ENCODE measurements at regions of chr7 and their contacts with region 1.

Region 1: DNA sequence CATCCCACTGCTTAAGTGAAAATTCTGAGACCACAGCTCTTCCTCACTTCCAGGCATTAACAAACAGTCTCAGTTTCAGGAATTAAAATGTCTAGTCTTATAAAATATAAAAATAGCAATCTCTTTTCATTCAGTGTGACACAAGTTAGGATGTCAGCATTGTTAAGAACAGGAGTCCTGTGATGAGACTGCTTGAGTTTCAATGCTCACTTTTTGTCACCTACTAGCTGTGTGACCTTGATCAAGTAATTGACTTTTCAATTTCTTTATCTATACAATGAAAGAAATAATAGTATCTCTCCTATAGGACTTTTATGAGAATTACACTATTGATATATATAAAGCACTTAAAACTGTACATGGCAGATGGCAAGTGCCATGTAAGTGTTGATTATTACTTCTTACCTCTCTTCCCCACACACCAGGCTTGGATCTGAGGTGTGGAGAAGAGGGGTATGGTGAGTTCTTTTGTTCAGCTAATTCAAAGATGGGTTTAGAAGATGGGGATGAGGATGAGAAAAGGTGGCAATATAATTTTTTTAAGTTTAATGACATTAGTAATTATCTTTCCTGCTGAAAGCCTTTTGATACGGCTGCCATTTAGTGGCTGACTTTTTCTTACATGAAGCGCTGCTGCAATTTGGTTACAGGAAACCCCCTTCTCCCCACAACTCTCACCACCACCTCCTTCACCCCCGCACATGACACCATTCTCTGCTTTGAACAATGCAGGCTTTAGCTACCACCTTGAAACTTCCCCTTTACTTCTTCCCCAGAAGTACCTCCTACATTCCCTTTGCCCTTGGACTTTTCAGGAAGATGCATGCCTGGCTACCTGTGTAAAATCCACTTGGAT is 20.8 kb upstream of the HYAL4 start:
- DNase-seq: peak; percentile 85
- H3K4me3 Mint-ChIP-seq: no peak overlapping the region
- H3K27ac Mint-ChIP-seq: peak overlapping the region; percentile 76
- H3K4me1 Mint-ChIP-seq: peaks cover 21% of the 10 kb centered on the region
- H3K27me3 Mint-ChIP-seq: peaks cover 13% of the 10 kb centered on the region

Region 2: GRCh38 chr7:123534383-123535260 is 289.5 kb before region 1 on chr7 and contains the start of gene IQUB:
- CTCF ChIA-PET with region 1: no interaction called
- intact Hi-C with region 1: loop called (anchors 1 kb)
- DNase-seq: peak; percentile 99
- H3K4me3 Mint-ChIP-seq: peak within 1 kb of the TSS; percentile 92
- H3K27ac Mint-ChIP-seq: peak within 1 kb of the TSS; percentile 82
- H3K4me1 Mint-ChIP-seq: peaks cover 27% of the 10 kb centered on the region
- H3K27me3 Mint-ChIP-seq: peaks cover 18% of the 10 kb centered on the region
- total RNA-seq, gene IQUB: 0.07 TPM in 1 of 2 experiments, not detected in the other

Region 3: GRCh38 chr7:123583821-123584220 is 240.3 kb before region 1 on chr7:
- CTCF ChIA-PET with region 1: no interaction called
- intact Hi-C with region 1: no loop called
- DNase-seq: no peak
- H3K4me3 Mint-ChIP-seq: no peak overlapping the region
- H3K27ac Mint-ChIP-seq: no peak overlapping the region
- H3K4me1 Mint-ChIP-seq: no peaks in the 10 kb centered on the region
- H3K27me3 Mint-ChIP-seq: peaks cover 4% of the 10 kb centered on the region

Region 4: DNA sequence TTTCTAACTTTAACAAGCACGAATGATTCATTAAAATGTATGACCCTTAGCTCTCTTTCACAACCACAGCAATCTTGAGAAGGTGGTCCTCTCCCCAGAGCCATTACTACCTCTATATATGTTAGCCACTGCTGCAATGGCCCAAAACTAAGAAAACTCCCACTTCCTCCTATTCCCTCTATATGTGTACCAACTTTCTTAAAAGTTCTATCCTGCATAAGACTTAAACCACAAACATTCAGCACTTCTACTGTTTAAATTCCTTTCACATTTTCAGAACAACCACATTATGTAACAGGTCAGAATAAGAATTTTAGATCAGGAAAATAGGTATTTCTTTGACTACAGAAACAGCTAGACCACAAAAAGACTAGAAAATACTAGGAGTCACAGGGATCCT is 111.5 kb before region 1 on chr7:
- CTCF ChIA-PET with region 1: no interaction called
- intact Hi-C with region 1: loop called (anchors 1 kb)
- DNase-seq: no peak
- H3K4me3 Mint-ChIP-seq: no peak overlapping the region
- H3K27ac Mint-ChIP-seq: peak overlapping the region; percentile 14
- H3K4me1 Mint-ChIP-seq: peaks cover 52% of the 10 kb centered on the region
- H3K27me3 Mint-ChIP-seq: no peaks in the 10 kb centered on the region

Region 5: GRCh38 chr7:123727071-123727837 is 96.9 kb before region 1 on chr7:
- CTCF ChIA-PET with region 1: no interaction called
- intact Hi-C with region 1: no loop called
- DNase-seq: no peak
- H3K4me3 Mint-ChIP-seq: no peak overlapping the region
- H3K27ac Mint-ChIP-seq: no peak overlapping the region
- H3K4me1 Mint-ChIP-seq: peaks cover 41% of the 10 kb centered on the region
- H3K27me3 Mint-ChIP-seq: no peaks in the 10 kb centered on the region

Region 6: DNA sequence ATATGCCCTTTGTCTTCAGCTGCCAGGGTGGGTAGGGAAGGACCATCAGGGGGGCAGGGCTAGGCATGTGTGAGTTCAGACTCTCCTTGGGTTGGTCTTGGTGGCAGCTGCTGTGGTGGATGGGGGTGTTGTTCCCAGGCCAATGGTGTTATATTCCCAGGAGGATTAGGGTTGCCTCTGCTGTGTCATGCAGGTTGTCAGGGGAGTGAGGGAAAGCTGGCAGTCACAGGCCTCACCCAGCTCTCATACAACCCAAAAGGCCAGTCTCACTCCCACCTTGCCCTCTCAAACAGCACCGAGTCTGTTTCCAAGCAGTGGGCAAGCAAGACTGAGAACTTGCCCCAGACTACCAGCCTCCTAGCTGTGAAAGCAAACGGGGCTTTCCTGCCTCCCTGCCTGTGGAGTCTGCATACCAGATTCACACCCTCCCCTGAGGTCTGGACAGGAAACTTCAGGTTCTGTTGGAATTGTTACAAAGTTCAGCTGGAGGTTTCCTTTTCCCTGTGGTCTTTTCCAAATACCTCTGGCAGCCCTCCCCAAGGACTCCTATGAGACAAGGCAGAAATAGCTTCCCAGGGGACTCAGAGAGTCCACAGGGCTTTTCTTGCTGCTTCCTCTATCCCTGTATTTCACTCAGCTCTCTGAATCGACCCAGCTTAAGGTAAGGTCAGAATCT is 22.2 kb after region 1 on chr7:
- CTCF ChIA-PET with region 1: no interaction called
- intact Hi-C with region 1: no loop called
- DNase-seq: no peak
- H3K4me3 Mint-ChIP-seq: no peak overlapping the region
- H3K27ac Mint-ChIP-seq: no peak overlapping the region
- H3K4me1 Mint-ChIP-seq: no peaks in the 10 kb centered on the region
- H3K27me3 Mint-ChIP-seq: peaks cover 20% of the 10 kb centered on the region

Region 7: DNA sequence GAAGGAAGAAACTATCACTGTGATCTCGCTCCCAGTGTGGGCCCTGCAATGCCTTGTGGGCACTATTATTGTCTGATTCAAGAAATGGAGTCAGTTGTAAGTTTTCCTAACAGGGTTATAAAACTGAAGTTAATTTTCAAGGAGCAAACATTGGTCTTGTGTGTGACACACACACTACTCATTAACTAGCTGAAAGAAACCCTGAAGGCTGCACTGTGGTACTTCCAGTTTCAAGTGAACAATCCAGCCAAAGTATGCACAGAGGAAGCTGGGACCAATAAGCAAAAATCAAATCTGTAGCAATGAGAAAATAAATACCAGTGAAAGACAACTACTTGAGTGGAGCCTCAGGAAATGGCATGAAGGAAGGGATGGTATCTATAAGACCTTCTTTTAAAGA is 1612.1 kb after region 1 on chr7:
- CTCF ChIA-PET with region 1: no interaction called
- intact Hi-C with region 1: no loop called
- DNase-seq: no peak
- H3K4me3 Mint-ChIP-seq: no peak overlapping the region
- H3K27ac Mint-ChIP-seq: no peak overlapping the region
- H3K4me1 Mint-ChIP-seq: no peaks in the 10 kb centered on the region
- H3K27me3 Mint-ChIP-seq: no peaks in the 10 kb centered on the region